WTC11 (cell line): ENCODE measurements at regions of chr10 and their contacts with region 1.

Region 1: DNA sequence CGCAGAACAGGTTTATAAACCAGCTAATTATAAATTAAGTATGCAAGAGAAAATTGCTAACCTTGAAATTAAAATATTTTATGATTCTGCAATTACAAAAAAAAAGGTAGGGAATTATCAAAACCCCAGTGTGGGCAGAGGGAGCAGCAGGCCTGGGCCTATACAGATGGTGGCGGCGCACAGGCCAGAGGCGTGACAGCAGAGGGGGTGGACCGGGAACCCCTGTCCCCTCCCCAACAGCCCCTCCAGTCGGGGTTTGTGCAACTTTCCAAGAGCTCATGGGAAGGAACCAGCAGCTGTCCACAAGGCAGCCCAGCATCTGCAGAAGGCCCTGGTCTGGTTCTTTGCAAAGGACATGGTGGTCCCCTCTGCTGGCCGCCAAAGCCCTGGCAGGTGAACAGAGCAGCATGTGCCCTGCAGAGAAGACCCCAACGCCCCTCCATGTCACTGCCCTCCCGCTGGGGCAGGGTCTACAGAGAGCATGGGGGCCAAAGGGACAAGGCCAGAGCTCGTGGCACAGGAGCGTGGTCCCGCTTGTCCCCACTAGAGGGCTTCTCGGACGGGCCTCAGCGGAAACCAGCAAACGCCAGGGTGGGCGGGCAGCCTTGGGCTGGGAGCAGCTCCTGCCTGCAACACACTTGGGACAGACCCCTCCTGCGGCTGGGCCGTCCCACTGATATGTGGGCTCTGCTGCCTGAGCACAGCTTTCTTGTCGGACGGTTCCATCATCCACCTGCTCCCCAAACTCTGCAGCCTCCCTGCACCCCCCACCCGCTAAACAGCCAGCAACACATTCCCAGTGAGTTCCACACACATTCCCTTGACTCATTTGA is 75.1 kb downstream of the EBF3 start:
- DNase-seq: peak; percentile 91
- ATAC-seq: peak; percentile 95
- H3K4me3 Mint-ChIP-seq: no peak overlapping the region
- H3K27ac Mint-ChIP-seq: no peak overlapping the region; the same call in 1 of the 2 replicates
- H3K4me1 Mint-ChIP-seq: peaks cover 47% of the 10 kb centered on the region
- H3K27me3 Mint-ChIP-seq: no peaks in the 10 kb centered on the region
- CTCF ChIP-seq: peak; percentile 83

Region 2: DNA sequence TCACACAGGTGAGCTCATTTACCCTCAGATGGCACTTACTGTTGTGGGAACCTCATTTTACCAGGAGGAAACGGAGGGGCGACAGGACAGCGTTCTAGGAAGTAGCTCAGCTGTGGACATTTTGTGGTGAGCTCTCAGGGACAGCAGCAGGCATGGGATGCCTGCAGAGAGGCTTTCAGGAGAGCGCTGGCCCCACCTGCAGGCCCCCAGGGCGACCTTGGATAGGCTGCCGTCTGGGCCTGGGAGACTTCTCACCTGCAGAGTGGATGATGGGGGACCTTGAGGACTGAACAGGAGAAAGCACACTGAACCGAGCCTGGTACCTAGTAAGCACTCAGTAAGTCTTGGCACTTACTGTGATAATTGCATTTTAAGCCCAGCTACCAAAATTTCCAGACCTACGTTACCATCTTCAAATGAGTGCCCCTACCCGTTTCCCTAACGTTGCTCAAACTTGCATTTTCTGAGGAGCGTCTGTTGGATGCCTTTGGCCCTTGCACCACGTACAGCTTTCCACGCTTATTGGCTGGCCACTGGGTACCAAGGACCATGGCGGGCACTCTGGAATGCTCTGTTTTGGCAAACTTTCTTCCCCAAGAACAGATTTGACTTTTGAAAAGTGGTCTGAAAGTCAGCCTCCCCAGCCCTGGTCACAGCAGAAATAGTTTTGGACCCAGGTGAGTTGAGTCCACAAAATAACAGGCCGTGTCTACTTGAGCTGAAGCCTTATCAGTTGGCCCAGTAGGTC is 148.3 kb before region 1 on chr10:
- CTCF ChIA-PET with region 1: no interaction called
- POLR2A ChIA-PET with region 1: no interaction called
- DNase-seq: peak; percentile 28
- ATAC-seq: peak; percentile 30; the same call in 1 of the 2 replicates
- H3K4me3 Mint-ChIP-seq: no peak overlapping the region
- H3K27ac Mint-ChIP-seq: no peak overlapping the region
- H3K4me1 Mint-ChIP-seq: 0 out of 2 replicates have a peak, but pooled peaks cover 2% of the 10 kb centered on the region
- H3K27me3 Mint-ChIP-seq: no peaks in the 10 kb centered on the region; the same call in 1 of the 2 replicates
- CTCF ChIP-seq: no peak

Region 3: GRCh38 chr10:129814681-129815646 is 74.0 kb before region 1 on chr10:
- CTCF ChIA-PET with region 1: no interaction called
- POLR2A ChIA-PET with region 1: no interaction called
- DNase-seq: no peak
- ATAC-seq: no peak
- H3K4me3 Mint-ChIP-seq: no peak overlapping the region
- H3K27ac Mint-ChIP-seq: no peak overlapping the region
- H3K4me1 Mint-ChIP-seq: no peaks in the 10 kb centered on the region
- H3K27me3 Mint-ChIP-seq: no peaks in the 10 kb centered on the region
- CTCF ChIP-seq: no peak

Region 4: DNA sequence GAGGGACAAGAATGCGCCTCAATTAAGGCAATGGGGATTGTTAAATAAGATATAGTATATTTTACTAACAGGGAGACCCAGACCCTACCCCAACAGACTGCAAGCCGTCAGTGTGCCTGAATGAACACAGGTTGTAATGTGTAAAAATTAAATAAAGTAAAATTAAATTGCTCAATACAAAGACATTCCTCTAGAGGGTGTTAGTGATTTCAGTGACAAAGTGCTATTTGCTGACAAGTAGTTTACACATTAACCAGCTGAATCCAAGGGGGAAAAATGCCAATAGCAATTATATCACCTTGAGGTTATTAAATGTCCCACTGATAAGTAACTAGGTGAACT is 35.5 kb before region 1 on chr10:
- CTCF ChIA-PET with region 1: interaction called, 14 read pairs
- POLR2A ChIA-PET with region 1: no interaction called
- DNase-seq: no peak
- ATAC-seq: no peak
- H3K4me3 Mint-ChIP-seq: no peak overlapping the region
- H3K27ac Mint-ChIP-seq: no peak overlapping the region
- H3K4me1 Mint-ChIP-seq: peaks cover 11% of the 10 kb centered on the region
- H3K27me3 Mint-ChIP-seq: no peaks in the 10 kb centered on the region
- CTCF ChIP-seq: peak; percentile 35; the same call in 1 of the 2 replicates

Region 5: DNA sequence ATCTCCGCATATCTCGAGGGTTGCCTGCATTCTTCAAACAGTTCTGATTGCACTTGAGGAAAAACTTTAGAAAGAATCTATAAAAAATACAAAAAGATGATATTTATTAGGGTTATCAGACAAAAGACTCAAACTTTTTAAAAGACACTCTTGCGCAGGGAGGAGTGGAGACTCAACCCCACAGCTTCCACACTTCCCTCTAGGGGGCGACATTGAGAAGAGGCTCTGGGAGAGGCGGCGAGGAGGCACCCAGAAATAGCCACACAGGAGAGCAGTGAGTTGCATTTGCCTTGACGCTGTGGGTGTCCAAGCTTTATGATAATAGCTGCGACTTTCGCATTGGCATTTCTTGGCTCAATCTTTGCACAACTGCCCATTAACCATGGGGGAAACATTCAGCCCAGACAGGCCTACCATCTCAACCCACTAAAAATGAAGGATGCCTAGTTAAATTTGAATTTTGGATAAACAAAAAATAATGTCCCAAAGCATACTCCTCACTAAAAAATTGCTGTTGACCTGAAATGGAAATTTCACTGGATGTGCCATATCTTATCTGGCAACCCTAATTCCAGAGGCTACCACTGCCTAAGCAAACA is 11.1 kb before region 1 on chr10:
- CTCF ChIA-PET with region 1: interaction called, 79 read pairs
- POLR2A ChIA-PET with region 1: no interaction called
- DNase-seq: peak; percentile 69
- ATAC-seq: peak; percentile 63
- H3K4me3 Mint-ChIP-seq: no peak overlapping the region
- H3K27ac Mint-ChIP-seq: no peak overlapping the region
- H3K4me1 Mint-ChIP-seq: peaks cover 8% of the 10 kb centered on the region
- H3K27me3 Mint-ChIP-seq: no peaks in the 10 kb centered on the region
- CTCF ChIP-seq: peak; percentile 67

Region 6: DNA sequence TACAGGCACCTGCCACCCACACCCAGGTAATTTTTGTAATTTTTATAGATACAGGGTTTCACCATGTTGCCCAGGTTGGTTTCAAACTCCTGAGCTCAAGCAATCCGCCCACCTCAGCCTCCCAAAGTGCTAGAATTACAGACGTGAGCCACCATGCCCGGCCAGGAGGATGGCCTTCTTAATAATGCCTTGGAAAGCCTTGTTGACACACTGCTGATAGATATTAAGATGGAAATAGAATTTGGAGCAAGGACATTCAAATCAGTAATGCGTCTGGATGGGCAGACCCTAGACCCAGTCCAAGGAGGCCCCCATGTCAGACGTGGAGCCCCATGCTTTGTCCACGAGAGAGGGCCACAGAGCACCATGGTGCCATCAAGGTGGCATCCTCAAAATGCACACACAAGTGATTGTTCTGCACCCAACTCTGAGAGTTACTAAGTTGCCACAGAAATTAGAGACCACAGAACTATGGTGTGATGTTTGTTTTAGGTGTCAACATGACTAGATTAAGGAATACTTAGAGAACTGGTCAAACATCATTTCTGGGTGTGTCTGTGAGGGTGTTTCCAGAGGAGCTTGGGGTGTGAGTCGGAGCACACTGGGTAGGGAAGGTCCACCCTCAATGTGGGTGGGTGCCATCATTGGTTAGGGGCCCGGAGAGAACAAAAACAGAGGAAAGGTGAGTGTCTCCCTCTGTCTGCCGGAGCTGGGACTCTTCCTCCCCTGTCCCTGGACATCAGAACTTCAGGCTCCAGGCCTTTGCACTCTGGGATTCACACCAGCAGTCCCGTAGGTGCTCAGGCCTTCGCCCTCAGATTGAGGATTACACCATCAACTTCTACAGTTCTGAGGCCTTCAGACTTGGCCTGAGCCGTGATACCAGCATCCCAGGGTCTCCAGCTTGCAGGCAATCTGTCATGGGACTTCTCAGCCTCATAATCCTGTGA is 40.6 kb after region 1 on chr10:
- CTCF ChIA-PET with region 1: interaction called, 10 read pairs
- POLR2A ChIA-PET with region 1: interaction called, 3 read pairs
- DNase-seq: peak; percentile 45
- ATAC-seq: peak; percentile 84
- H3K4me3 Mint-ChIP-seq: no peak overlapping the region
- H3K27ac Mint-ChIP-seq: no peak overlapping the region
- H3K4me1 Mint-ChIP-seq: peaks cover 16% of the 10 kb centered on the region
- H3K27me3 Mint-ChIP-seq: no peaks in the 10 kb centered on the region
- CTCF ChIP-seq: no peak

Region 7: GRCh38 chr10:129971381-129972144 is 82.6 kb after region 1 on chr10:
- CTCF ChIA-PET with region 1: interaction called, 40 read pairs
- POLR2A ChIA-PET with region 1: no interaction called
- DNase-seq: peak; percentile 69
- ATAC-seq: peak; percentile 38
- H3K4me3 Mint-ChIP-seq: peak overlapping the region; percentile 64
- H3K27ac Mint-ChIP-seq: no peak overlapping the region
- H3K4me1 Mint-ChIP-seq: peaks cover 35% of the 10 kb centered on the region
- H3K27me3 Mint-ChIP-seq: peaks cover 91% of the 10 kb centered on the region
- CTCF ChIP-seq: no peak

Region 8: DNA sequence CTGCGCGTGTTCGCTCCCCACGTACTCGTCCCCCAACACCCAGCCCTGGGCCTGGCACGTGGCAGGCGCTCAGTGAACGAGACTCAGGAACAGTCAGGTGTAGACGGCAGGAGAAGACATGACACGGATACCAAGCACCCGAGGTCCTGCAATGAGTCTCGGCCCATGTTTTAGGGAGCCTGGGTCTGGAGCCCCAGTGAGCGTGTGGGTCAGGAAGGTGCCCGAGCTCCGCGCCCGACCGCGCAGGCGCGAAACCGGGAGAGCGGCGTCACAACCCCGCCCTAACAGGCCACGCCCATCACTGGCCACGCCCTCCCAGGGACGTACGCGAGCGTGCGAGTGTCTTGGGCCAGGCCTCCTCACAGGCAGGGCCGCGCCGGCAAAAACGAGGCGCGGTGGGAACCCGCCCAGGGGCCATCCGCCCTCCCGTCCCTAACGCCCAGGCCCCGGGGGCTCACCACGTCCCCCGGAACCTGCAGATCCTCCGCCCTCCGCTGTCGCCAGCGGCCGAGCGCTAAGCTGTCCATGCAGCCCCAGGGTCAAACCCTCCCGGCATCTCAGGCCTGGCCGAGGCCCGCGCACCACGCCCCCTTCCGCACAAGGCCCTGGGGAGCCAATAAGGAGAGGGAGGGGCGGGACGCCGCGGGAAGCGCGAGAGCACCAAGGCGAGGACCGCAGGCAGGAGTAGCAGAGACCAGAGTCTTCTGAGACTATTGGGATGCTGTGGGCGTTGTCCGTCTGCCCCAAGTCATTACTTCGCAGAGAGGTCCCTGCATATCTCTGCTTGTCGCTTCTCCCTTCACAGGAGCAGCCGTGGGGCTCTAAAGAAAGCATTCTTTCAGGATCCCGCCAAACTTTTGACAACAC is 221.5 kb after region 1 on chr10 and contains the start of gene C10orf143:
- CTCF ChIA-PET with region 1: interaction called, 12 read pairs
- POLR2A ChIA-PET with region 1: no interaction called
- DNase-seq: peak; percentile 97
- ATAC-seq: peak; percentile 77
- H3K4me3 Mint-ChIP-seq: peak within 1 kb of the TSS; percentile 94
- H3K27ac Mint-ChIP-seq: peak within 1 kb of the TSS; percentile 98
- H3K4me1 Mint-ChIP-seq: peaks cover 29% of the 10 kb centered on the region
- H3K27me3 Mint-ChIP-seq: peaks cover 7% of the 10 kb centered on the region; the same call in 1 of the 2 replicates
- CTCF ChIP-seq: no peak
- total RNA-seq, gene C10orf143: 1.4 to 1.9 TPM (median 1.6 TPM) in 3 replicates